Activated CD8-positive, alpha-beta T cell treated with anti-CD3 and anti-CD28 coated beads for 36 hours (primary cell): ENCODE measurements at regions of chr1 and their contacts with region 1.

Region 1: GRCh38 chr1:55277377-55278130 is 62.4 kb upstream of the USP24 start:
- DNase-seq: peak; percentile 93
- ATAC-seq: peak; percentile 90
- H3K4me3 Mint-ChIP-seq: no peak overlapping the region
- H3K27ac Mint-ChIP-seq: peak overlapping the region; percentile 82
- H3K4me1 Mint-ChIP-seq: peaks cover 39% of the 10 kb centered on the region
- H3K27me3 Mint-ChIP-seq: no peaks in the 10 kb centered on the region
- CTCF ChIP-seq: peak; percentile 83

Region 2: DNA sequence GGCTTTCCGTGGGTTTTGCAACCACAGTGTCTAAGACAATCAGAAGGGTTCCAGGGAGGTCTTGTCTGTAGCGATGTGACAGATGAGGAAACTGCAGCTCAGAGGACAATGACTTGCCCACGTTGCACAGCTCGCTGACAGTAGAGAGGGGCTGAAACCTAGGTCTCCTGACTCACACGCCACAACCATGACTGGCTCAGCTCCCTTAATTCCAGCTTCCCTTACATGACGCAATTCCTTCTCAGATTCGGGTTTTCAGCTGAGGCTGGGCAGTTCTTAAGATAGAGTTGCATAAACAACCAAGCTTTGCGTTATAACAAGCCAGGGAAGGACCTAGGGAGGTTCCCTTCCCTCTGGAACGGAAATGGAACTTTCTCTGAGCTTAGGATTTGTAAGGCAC is 426.8 kb before region 1 on chr1:
- CTCF ChIA-PET with region 1: no interaction called
- POLR2A ChIA-PET with region 1: no interaction called
- intact Hi-C with region 1: no loop called
- DNase-seq: no peak
- ATAC-seq: no peak
- H3K4me3 Mint-ChIP-seq: no peak overlapping the region
- H3K27ac Mint-ChIP-seq: no peak overlapping the region
- H3K4me1 Mint-ChIP-seq: no peaks in the 10 kb centered on the region
- H3K27me3 Mint-ChIP-seq: no peaks in the 10 kb centered on the region
- CTCF ChIP-seq: no peak

Region 3: GRCh38 chr1:55140546-55140983 is 137.0 kb before region 1 on chr1:
- CTCF ChIA-PET with region 1: interaction called, 160 read pairs
- POLR2A ChIA-PET with region 1: no interaction called
- intact Hi-C with region 1: loop called (anchors 1 kb)
- DNase-seq: peak; percentile 85
- ATAC-seq: peak; percentile 98
- H3K4me3 Mint-ChIP-seq: no peak overlapping the region
- H3K27ac Mint-ChIP-seq: peak overlapping the region; percentile 43
- H3K4me1 Mint-ChIP-seq: peaks cover 10% of the 10 kb centered on the region
- H3K27me3 Mint-ChIP-seq: no peaks in the 10 kb centered on the region
- CTCF ChIP-seq: peak; percentile 77

Region 4: GRCh38 chr1:55146781-55147180 is 130.8 kb before region 1 on chr1:
- CTCF ChIA-PET with region 1: interaction called, 160 read pairs
- POLR2A ChIA-PET with region 1: interaction called, 3 read pairs
- intact Hi-C with region 1: no loop called
- DNase-seq: no peak
- ATAC-seq: no peak
- H3K4me3 Mint-ChIP-seq: no peak overlapping the region
- H3K27ac Mint-ChIP-seq: no peak overlapping the region
- H3K4me1 Mint-ChIP-seq: peaks cover 15% of the 10 kb centered on the region
- H3K27me3 Mint-ChIP-seq: no peaks in the 10 kb centered on the region
- CTCF ChIP-seq: no peak

Region 5: GRCh38 chr1:55204997-55205396 is 72.6 kb before region 1 on chr1:
- CTCF ChIA-PET with region 1: interaction called, 14 read pairs
- POLR2A ChIA-PET with region 1: no interaction called
- intact Hi-C with region 1: loop called (anchors 5 kb)
- DNase-seq: peak; percentile 56
- ATAC-seq: peak; percentile 77
- H3K4me3 Mint-ChIP-seq: peak overlapping the region; percentile 30
- H3K27ac Mint-ChIP-seq: peak overlapping the region; percentile 76
- H3K4me1 Mint-ChIP-seq: peaks cover 69% of the 10 kb centered on the region
- H3K27me3 Mint-ChIP-seq: no peaks in the 10 kb centered on the region
- CTCF ChIP-seq: no peak

Region 6: GRCh38 chr1:55214212-55215005 is 63.1 kb before region 1 on chr1:
- CTCF ChIA-PET with region 1: interaction called, 14 read pairs
- POLR2A ChIA-PET with region 1: interaction called, 3 read pairs
- intact Hi-C with region 1: loop called (anchors 5 kb)
- DNase-seq: peak; percentile 51
- ATAC-seq: peak; percentile 6
- H3K4me3 Mint-ChIP-seq: peak overlapping the region; percentile 83
- H3K27ac Mint-ChIP-seq: peak overlapping the region; percentile 86
- H3K4me1 Mint-ChIP-seq: peaks cover 65% of the 10 kb centered on the region
- H3K27me3 Mint-ChIP-seq: no peaks in the 10 kb centered on the region
- CTCF ChIP-seq: no peak

Region 7: GRCh38 chr1:55257958-55258357 is 19.6 kb before region 1 on chr1:
- CTCF ChIA-PET with region 1: interaction called, 13 read pairs
- POLR2A ChIA-PET with region 1: interaction called, 3 read pairs
- intact Hi-C with region 1: no loop called
- DNase-seq: peak; percentile 84
- ATAC-seq: peak; percentile 90
- H3K4me3 Mint-ChIP-seq: peak overlapping the region; percentile 15
- H3K27ac Mint-ChIP-seq: peak overlapping the region; percentile 4
- H3K4me1 Mint-ChIP-seq: peaks cover 25% of the 10 kb centered on the region
- H3K27me3 Mint-ChIP-seq: no peaks in the 10 kb centered on the region
- CTCF ChIP-seq: no peak

Region 8: DNA sequence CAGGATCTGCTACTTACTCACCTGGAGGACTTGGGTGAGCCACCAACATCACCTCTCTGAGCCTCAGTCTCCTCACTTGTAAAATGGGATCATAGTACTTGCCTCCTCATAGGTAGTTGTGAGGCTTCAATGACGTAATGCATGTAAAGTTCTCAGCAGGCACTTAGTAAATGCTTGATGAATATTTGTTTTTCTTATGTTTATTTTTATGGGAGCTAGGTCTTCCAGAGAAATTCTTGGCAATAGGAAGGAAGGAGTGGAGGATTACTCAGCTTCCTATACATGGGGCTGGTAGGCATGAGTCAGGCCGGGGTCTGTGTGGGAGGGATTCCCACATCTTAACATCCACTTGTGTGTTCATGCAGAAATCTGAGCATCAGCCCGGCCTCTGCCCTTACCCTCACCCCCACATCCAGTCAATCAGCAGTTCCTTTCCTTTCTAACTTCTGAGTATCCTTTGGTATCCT is 33.0 kb after region 1 on chr1:
- CTCF ChIA-PET with region 1: no interaction called
- POLR2A ChIA-PET with region 1: no interaction called
- intact Hi-C with region 1: no loop called
- DNase-seq: peak; percentile 48
- ATAC-seq: peak; percentile 49
- H3K4me3 Mint-ChIP-seq: no peak overlapping the region
- H3K27ac Mint-ChIP-seq: no peak overlapping the region
- H3K4me1 Mint-ChIP-seq: peaks cover 8% of the 10 kb centered on the region
- H3K27me3 Mint-ChIP-seq: no peaks in the 10 kb centered on the region
- CTCF ChIP-seq: no peak